Mammary epithelial cell (primary cell): ENCODE measurements at regions of chr3 and their contacts with region 1.

Region 1: GRCh38 chr3:52001443-52001974 is 5.8 kb upstream of the RPL29 start:
- DNase-seq: peak; percentile 49
- H3K4me3 ChIP-seq: no peak overlapping the region
- H3K27ac ChIP-seq: no peak overlapping the region
- H3K4me1 ChIP-seq: peaks cover 35% of the 10 kb centered on the region
- H3K27me3 ChIP-seq: no peaks in the 10 kb centered on the region
- CTCF ChIP-seq: peak; percentile 75 to 90

Region 2: DNA sequence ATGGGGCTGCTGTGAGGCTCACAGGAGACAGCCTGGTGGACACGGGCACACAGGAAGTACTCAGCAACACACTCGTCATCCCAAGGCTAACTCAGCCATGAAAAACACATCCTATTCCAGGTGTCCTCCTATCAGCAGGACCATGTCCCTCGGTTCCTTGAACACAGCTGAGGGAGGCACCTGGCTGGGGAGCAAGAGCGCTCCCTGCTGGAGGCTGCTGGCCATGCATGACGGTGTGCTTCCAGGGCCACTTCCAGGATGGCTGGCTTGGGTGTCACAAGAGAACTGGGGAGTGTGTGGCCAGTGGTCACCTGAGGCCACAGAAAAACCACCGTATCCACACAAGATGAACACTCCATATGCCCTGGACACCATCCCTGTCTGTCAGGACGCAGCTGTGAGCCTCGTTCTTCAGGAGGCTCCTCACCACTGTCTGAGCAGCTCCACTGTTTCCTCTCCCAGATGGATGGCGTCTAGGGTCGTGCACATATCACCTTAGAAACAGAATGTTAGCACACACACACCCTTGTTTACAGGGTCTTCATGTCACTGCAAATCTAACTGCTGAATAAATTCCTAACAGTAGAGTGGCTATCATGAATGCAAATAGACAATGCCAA is 121.7 kb after region 1 on chr3:
- CTCF ChIA-PET with region 1: interaction called, 8 read pairs
- dilution Hi-C with region 1: loop called (anchors 10 kb)
- in situ Hi-C with region 1: loop called in 1 of 2 experiments (anchors 5 kb)
- intact Hi-C with region 1: loop called (anchors 1 kb)
- DNase-seq: peak; percentile 66
- H3K4me3 ChIP-seq: no peak overlapping the region
- H3K27ac ChIP-seq: no peak overlapping the region
- H3K4me1 ChIP-seq: peaks cover 26% of the 10 kb centered on the region
- H3K27me3 ChIP-seq: no peaks in the 10 kb centered on the region
- CTCF ChIP-seq: peak; percentile 99